Activated naive CD4-positive, alpha-beta T cell treated with anti-CD3 and anti-CD28 coated beads for 36 hours (primary cell): ENCODE measurements at regions of chr13 and their contacts with region 1.

Region 1: DNA sequence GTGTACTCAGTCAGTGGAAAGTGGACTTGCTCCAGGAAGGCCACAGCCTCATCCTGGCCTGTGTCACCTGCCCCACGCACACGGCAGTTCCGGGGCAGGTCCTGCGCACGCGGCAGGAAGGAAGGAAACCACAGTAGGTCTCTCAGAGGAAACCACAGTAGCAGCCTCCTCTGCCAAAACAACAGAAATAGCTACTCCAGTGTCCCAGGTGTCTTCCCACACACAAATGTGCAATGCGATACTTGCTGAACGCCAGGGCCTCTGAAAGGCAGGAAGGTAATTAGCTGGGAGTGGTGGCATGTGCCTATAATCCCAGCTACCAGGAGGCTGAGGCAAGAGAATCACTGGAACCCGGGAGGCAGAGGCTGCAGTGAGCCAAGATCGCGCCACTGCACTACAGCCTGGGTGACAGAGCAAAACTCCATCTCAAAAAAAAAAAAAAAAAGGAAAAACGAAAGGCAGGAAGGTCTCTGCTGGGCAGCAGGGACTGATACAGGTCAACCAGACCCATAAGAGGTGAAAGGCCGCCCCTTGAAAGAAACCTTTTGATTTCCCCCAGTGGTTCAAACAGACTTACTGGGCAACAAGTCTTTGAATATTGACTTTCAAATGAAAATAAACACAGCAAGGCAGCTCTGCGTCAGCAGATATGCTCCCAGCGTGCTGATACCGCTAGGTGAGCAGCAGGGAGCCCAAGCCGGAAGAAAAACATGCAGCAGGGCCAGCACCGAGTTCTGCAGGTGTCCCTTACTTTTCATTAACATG is 49.5 kb downstream of the CRYL1 start:
- DNase-seq: peak; percentile 82
- H3K4me3 Mint-ChIP-seq: peak overlapping the region; percentile 65
- H3K27ac Mint-ChIP-seq: peak overlapping the region; percentile 92
- H3K4me1 Mint-ChIP-seq: peaks cover 27% of the 10 kb centered on the region
- H3K27me3 Mint-ChIP-seq: no peaks in the 10 kb centered on the region

Region 2: GRCh38 chr13:20420938-20421337 is 55.2 kb before region 1 on chr13:
- CTCF ChIA-PET with region 1: no interaction called
- intact Hi-C with region 1: loop called (anchors 1 kb)
- DNase-seq: no peak
- H3K4me3 Mint-ChIP-seq: no peak overlapping the region
- H3K27ac Mint-ChIP-seq: peak overlapping the region; percentile 59
- H3K4me1 Mint-ChIP-seq: peaks cover 35% of the 10 kb centered on the region
- H3K27me3 Mint-ChIP-seq: no peaks in the 10 kb centered on the region